H1 (cell line): ENCODE measurements at regions of chr14 and their contacts with region 1.

Region 1: GRCh38 chr14:33848706-33849454 is 102.0 kb downstream of the EGLN3 start:
- DNase-seq: peak; percentile 86 to 89
- H3K4me3 ChIP-seq: no peak overlapping the region
- H3K27ac ChIP-seq: no peak overlapping the region
- H3K4me1 ChIP-seq: peaks cover 4 to 8% (median 6%) of the 10 kb centered on the region in 4 experiments; a peak in 5 of 7 replicates
- H3K27me3 ChIP-seq: no peaks in the 10 kb centered on the region
- CTCF ChIP-seq: peak; percentile 77 to 95 (median 94)
- EP300 ChIP-seq: no peak
- POLR2A ChIP-seq: no peak
- RAD21 ChIP-seq: peak; percentile 80 to 89

Region 2: GRCh38 chr14:33902363-33902762 is 53.5 kb after region 1 on chr14:
- CTCF ChIA-PET with region 1: interaction called, 42 read pairs
- POLR2A ChIA-PET with region 1: no interaction called
- DNase-seq: no peak
- H3K4me3 ChIP-seq: no peak overlapping the region
- H3K27ac ChIP-seq: no peak overlapping the region
- H3K4me1 ChIP-seq: no peaks in the 10 kb centered on the region; a peak in 1 of 7 replicates
- H3K27me3 ChIP-seq: no peaks in the 10 kb centered on the region
- CTCF ChIP-seq: no peak
- EP300 ChIP-seq: no peak
- POLR2A ChIP-seq: no peak
- RAD21 ChIP-seq: no peak

Region 3: GRCh38 chr14:33929799-33930408 is 81.0 kb after region 1 on chr14:
- CTCF ChIA-PET with region 1: interaction called, 13 read pairs
- POLR2A ChIA-PET with region 1: no interaction called
- DNase-seq: no peak
- H3K4me3 ChIP-seq: no peak overlapping the region
- H3K27ac ChIP-seq: no peak overlapping the region
- H3K4me1 ChIP-seq: peaks cover 7 to 19% (median 16%) of the 10 kb centered on the region in 4 experiments; a peak in 6 of 7 replicates
- H3K27me3 ChIP-seq: no peaks in the 10 kb centered on the region
- CTCF ChIP-seq: no peak
- EP300 ChIP-seq: no peak
- POLR2A ChIP-seq: no peak
- RAD21 ChIP-seq: no peak

Region 4: DNA sequence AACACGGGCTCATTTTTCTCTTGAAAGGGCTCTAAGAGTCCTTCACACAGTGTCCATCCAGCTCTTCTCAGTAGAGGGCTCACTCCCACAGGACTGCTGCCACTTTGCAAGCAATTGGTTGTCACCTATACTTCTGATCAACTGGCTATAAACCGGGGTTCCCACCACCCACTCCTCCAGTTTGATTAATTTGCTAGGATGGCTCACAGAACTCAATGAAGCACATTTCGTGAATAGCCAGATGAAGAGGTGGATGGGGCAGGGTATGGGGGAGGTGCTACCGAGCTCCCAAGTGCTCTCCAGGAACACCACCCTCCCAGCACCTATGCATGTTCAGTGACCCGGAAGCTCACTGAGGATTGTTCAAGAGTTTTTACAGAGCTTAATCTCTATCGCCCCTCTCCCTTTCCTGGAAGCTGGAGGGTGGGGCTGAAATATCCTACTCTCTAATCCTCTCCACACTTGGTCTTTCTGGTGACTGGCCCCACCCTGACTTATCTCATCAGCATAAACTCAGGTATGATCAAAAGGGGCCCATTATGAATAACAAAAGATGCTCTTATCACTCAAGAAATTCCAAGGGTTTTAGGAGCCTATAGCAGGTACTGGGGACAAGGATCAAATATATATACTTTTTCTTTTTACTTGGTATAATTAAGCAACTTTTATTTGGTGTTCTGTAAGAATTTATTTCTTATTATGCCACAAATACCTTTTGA is 115.9 kb after region 1 on chr14:
- CTCF ChIA-PET with region 1: interaction called, 11 read pairs
- POLR2A ChIA-PET with region 1: no interaction called
- DNase-seq: no peak
- H3K4me3 ChIP-seq: no peak overlapping the region
- H3K27ac ChIP-seq: no peak overlapping the region
- H3K4me1 ChIP-seq: peaks cover 0 to 3% (median under 1%) of the 10 kb centered on the region in 4 experiments; a peak in 3 of 7 replicates
- H3K27me3 ChIP-seq: no peaks in the 10 kb centered on the region
- CTCF ChIP-seq: no peak
- EP300 ChIP-seq: no peak
- POLR2A ChIP-seq: no peak
- RAD21 ChIP-seq: no peak

Region 5: DNA sequence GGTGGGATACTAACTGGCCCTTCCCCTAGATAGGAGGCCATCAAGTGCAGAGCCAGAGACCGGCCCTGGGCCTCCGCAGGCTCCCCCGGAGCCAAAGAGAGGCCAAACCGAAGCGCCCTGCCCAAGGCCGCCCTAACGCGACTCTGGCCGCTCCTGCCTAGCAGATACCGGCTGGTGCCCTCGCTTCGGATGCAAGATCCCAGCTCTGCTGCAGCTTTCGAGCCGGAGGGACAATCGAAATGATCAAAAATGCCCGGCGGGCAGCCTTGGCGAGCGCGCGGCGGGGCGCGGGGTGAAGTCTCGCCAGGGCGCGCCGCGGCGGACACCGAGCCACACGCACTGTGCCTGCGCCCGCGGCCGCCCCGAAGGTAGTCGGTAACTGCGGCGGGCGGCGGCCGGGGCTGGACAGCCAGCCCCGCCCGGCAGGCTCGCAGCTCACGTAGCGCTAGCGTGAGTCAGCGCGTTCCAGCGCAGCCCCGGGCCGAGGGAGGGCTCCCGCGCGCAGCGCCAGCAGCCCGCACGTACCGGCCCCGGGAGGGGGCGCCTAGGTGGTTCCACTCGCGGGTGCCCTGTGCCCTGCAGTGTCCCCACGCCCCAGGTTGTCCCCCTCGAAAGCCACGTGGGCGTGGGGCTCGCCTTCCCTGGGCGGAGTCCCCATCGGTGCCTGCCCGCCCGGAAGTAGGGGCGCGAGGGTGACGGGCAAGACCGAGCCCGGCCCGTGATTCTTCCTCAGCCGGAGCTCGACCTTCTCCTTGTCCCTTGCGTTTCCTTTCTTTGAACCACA is 211.2 kb after region 1 on chr14:
- CTCF ChIA-PET with region 1: interaction called, 13 read pairs
- POLR2A ChIA-PET with region 1: interaction called, 3 read pairs
- DNase-seq: peak in 1 of 2 experiments; percentile 79
- H3K4me3 ChIP-seq: peak overlapping the region; percentile 45 to 66 (median 52)
- H3K27ac ChIP-seq: no peak overlapping the region; the same call in 1 of the 2 replicates
- H3K4me1 ChIP-seq: peaks cover 0 to 11% (median 6%) of the 10 kb centered on the region in 4 experiments; a peak in 6 of 7 replicates
- H3K27me3 ChIP-seq: peaks cover 0 to 18% (median 13%) of the 10 kb centered on the region in 4 experiments; a peak in 5 of 7 replicates
- CTCF ChIP-seq: no peak; a peak in 1 of 4 replicates
- EP300 ChIP-seq: no peak
- POLR2A ChIP-seq: peak; percentile 52 to 64
- RAD21 ChIP-seq: no peak

Region 6: GRCh38 chr14:34227834-34228649 is 379.2 kb after region 1 on chr14:
- CTCF ChIA-PET with region 1: interaction called, 15 read pairs
- POLR2A ChIA-PET with region 1: no interaction called
- DNase-seq: peak; percentile 41 to 83
- H3K4me3 ChIP-seq: no peak overlapping the region; a peak in 1 of 8 replicates
- H3K27ac ChIP-seq: no peak overlapping the region
- H3K4me1 ChIP-seq: peaks cover 0 to 6% (median 1%) of the 10 kb centered on the region in 4 experiments; a peak in 3 of 7 replicates
- H3K27me3 ChIP-seq: no peaks in the 10 kb centered on the region
- CTCF ChIP-seq: peak; percentile 72 to 77 (median 74)
- EP300 ChIP-seq: no peak
- POLR2A ChIP-seq: no peak
- RAD21 ChIP-seq: peak; percentile 86 to 89